Ascending aorta (tissue), 2 donors: ENCODE measurements at regions of chr3 and their contacts with region 1.

Region 1: GRCh38 chr3:45387636-45388348 is 584 bp upstream of the LARS2 start:
- DNase-seq: no peak
- H3K4me3 ChIP-seq: peak overlapping the region; percentile 78 to 86
- H3K27ac ChIP-seq: no peak overlapping the region
- H3K4me1 ChIP-seq: peaks cover 0 to 7% of the 10 kb centered on the region in 2 donors
- H3K27me3 ChIP-seq: no peaks in the 10 kb centered on the region
- CTCF ChIP-seq: no peak

Region 2: DNA sequence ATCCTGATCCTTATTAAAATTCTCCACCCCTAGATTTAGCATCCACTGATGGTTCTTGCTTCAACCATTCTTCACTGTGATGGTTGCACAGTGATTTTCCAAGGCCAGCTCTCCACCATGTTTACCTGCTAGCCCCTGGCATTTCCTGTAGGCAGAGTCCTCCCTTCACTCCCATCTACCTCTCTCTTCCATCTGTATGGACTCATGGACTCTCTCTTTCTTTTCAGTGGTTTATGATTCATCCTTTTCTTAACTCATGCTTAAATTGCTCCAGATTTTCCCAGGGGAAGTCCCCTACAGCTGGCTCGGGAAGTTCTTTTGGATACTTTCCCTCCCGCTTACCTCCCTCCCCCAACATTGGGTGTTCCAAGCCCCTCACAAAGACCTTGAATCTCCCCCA is 494.7 kb before region 1 on chr3:
- intact Hi-C with region 1: no loop called
- DNase-seq: no peak
- H3K4me3 ChIP-seq: no peak overlapping the region
- H3K27ac ChIP-seq: no peak overlapping the region
- H3K4me1 ChIP-seq: no peaks in the 10 kb centered on the region
- H3K27me3 ChIP-seq: no peaks in the 10 kb centered on the region
- CTCF ChIP-seq: no peak

Region 3: GRCh38 chr3:45224824-45225464 is 162.8 kb before region 1 on chr3:
- intact Hi-C with region 1: loop called (anchors 1 kb)
- DNase-seq: peak in 1 of 2 donors; percentile 78
- H3K4me3 ChIP-seq: peak overlapping the region; percentile 64 to 86
- H3K27ac ChIP-seq: no peak overlapping the region
- H3K4me1 ChIP-seq: peaks cover 2 to 7% of the 10 kb centered on the region in 2 donors
- H3K27me3 ChIP-seq: no peaks in the 10 kb centered on the region
- CTCF ChIP-seq: peak; percentile 21 to 58 (median 35)

Region 4: DNA sequence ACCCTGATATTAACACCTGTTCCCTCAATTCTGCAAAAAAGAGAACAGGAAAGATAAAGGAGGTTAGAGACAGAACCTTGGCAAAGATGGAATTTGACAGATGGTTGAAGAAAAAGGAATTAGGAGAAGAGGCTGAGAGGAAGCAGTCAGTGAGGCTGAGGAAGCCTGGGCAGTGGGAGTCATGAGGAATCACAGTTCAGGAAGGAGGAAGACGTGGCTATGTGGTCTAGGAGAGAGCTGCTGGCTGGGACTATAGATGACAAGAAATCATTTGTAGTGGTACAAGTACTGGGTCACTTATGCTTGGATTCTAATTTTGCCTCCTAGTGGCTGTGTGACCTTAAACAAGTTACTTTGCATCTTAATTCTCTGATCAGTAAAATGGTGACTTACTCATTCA is 49.6 kb after region 1 on chr3:
- intact Hi-C with region 1: no loop called
- DNase-seq: no peak
- H3K4me3 ChIP-seq: no peak overlapping the region
- H3K27ac ChIP-seq: no peak overlapping the region
- H3K4me1 ChIP-seq: no peaks in the 10 kb centered on the region
- H3K27me3 ChIP-seq: no peaks in the 10 kb centered on the region
- CTCF ChIP-seq: no peak